Caco-2 (cell line): ENCODE measurements at regions of chr14 and their contacts with region 1.

Region 1: GRCh38 chr14:86961106-86961716 is 1031.8 kb downstream of the GALC start:
- DNase-seq: peak in 1 of 2 experiments; percentile 53
- H3K4me3 ChIP-seq: no peak overlapping the region
- H3K4me3 Mint-ChIP-seq: no peak overlapping the region
- H3K27ac Mint-ChIP-seq: no peak overlapping the region
- H3K4me1 ChIP-seq: no peaks in the 10 kb centered on the region
- H3K4me1 Mint-ChIP-seq: no peaks in the 10 kb centered on the region
- H3K27me3 ChIP-seq: no peaks in the 10 kb centered on the region
- H3K27me3 Mint-ChIP-seq: peaks cover 10% of the 10 kb centered on the region
- CTCF ChIP-seq: peak; percentile 71 to 72

Region 2: DNA sequence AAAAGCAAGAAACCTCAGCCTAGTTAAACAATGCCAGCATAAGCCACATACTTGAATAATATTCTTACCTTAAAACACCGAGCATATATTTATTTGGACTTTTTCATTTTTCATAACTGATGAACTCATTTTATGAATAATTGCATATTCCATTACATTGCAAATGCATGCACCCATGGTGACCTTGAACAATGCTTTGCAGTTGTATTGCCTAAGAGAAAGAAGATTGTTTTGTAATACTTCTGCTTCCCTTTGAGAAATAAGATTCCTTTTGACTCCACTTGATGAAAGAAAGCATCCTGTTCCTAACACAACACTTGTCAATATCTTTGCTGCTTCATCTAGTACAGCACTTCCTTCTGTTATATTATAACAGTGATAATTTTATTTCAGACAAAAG is 249.0 kb before region 1 on chr14:
- CTCF ChIA-PET with region 1: no interaction called
- POLR2A ChIA-PET with region 1: no interaction called
- intact Hi-C with region 1: no loop called
- DNase-seq: no peak
- H3K4me3 ChIP-seq: no peak overlapping the region
- H3K4me3 Mint-ChIP-seq: no peak overlapping the region
- H3K27ac Mint-ChIP-seq: no peak overlapping the region
- H3K4me1 ChIP-seq: peaks cover 10% of the 10 kb centered on the region; the same call in 1 of the 2 replicates
- H3K4me1 Mint-ChIP-seq: no peaks in the 10 kb centered on the region
- H3K27me3 ChIP-seq: no peaks in the 10 kb centered on the region
- H3K27me3 Mint-ChIP-seq: no peaks in the 10 kb centered on the region
- CTCF ChIP-seq: no peak

Region 3: DNA sequence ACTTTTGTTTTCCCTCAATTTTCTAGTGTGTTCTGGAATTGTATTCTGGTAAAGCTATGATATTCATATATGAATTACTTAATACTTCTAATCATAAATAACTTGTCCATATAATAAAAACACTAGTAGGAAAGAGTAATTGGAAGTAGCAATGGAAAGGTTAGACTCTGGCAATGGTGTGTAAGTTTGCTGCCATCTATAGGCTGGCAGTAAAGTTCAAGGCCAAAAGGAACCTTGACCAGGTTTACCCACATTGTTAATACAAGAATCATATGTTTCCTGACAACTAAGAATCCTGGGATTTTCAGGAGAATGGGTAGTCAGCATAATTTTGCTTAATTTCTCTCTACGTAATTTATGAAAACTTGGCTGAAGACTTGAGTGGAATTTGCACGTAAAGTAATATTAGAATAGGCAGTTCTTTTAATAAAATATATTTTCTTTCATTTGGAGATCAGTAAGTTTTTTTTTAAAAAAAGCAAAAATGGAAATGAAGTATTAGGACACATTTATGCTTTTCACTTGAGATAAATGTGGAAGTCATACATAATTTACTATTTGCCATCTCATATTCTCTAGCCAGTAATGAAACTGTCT is 105.1 kb after region 1 on chr14:
- CTCF ChIA-PET with region 1: no interaction called
- POLR2A ChIA-PET with region 1: no interaction called
- intact Hi-C with region 1: loop called (anchors 1 kb)
- DNase-seq: peak in 1 of 2 experiments; percentile 5
- H3K4me3 ChIP-seq: no peak overlapping the region
- H3K4me3 Mint-ChIP-seq: no peak overlapping the region
- H3K27ac Mint-ChIP-seq: no peak overlapping the region
- H3K4me1 ChIP-seq: no peaks in the 10 kb centered on the region
- H3K4me1 Mint-ChIP-seq: no peaks in the 10 kb centered on the region
- H3K27me3 ChIP-seq: no peaks in the 10 kb centered on the region
- H3K27me3 Mint-ChIP-seq: peaks cover 1% of the 10 kb centered on the region
- CTCF ChIP-seq: peak; percentile 29 to 52

Region 4: GRCh38 chr14:87264272-87265195 is 303.3 kb after region 1 on chr14:
- CTCF ChIA-PET with region 1: no interaction called
- POLR2A ChIA-PET with region 1: no interaction called
- intact Hi-C with region 1: no loop called
- DNase-seq: no peak
- H3K4me3 ChIP-seq: no peak overlapping the region
- H3K4me3 Mint-ChIP-seq: no peak overlapping the region
- H3K27ac Mint-ChIP-seq: no peak overlapping the region
- H3K4me1 ChIP-seq: no peaks in the 10 kb centered on the region
- H3K4me1 Mint-ChIP-seq: no peaks in the 10 kb centered on the region
- H3K27me3 ChIP-seq: no peaks in the 10 kb centered on the region
- H3K27me3 Mint-ChIP-seq: no peaks in the 10 kb centered on the region
- CTCF ChIP-seq: no peak

Region 5: GRCh38 chr14:87615822-87616679 is 654.8 kb after region 1 on chr14:
- CTCF ChIA-PET with region 1: no interaction called
- POLR2A ChIA-PET with region 1: no interaction called
- intact Hi-C with region 1: loop called (anchors 10 kb)
- DNase-seq: peak; percentile 62 to 69
- H3K4me3 ChIP-seq: no peak overlapping the region
- H3K4me3 Mint-ChIP-seq: no peak overlapping the region
- H3K27ac Mint-ChIP-seq: no peak overlapping the region
- H3K4me1 ChIP-seq: no peaks in the 10 kb centered on the region
- H3K4me1 Mint-ChIP-seq: no peaks in the 10 kb centered on the region
- H3K27me3 ChIP-seq: no peaks in the 10 kb centered on the region
- H3K27me3 Mint-ChIP-seq: peaks cover 2% of the 10 kb centered on the region
- CTCF ChIP-seq: peak; percentile 72 to 73